CD8-positive, alpha-beta memory T cell (primary cell): ENCODE measurements at regions of chr3 and their contacts with region 1.

Region 1: GRCh38 chr3:141402476-141403171 is 34.3 kb downstream of the ZBTB38 start:
- DNase-seq: peak; percentile 21 to 70 (median 44)
- H3K4me3 ChIP-seq: peak overlapping the region; percentile 75
- H3K4me3 Mint-ChIP-seq: peak overlapping the region; percentile 93 to 99 (median 96)
- H3K27ac ChIP-seq: peak overlapping the region; percentile 55
- H3K27ac Mint-ChIP-seq: peak overlapping the region; percentile 92 to 97 (median 96)
- H3K4me1 ChIP-seq: peaks cover 61% of the 10 kb centered on the region
- H3K4me1 Mint-ChIP-seq: peaks cover 59 to 77% (median 74%) of the 10 kb centered on the region in 3 donors
- H3K27me3 ChIP-seq: no peaks in the 10 kb centered on the region
- H3K27me3 Mint-ChIP-seq: no peaks in the 10 kb centered on the region

Region 2: GRCh38 chr3:141379250-141379966 is 23.2 kb before region 1 on chr3:
- CTCF ChIA-PET with region 1: interaction called, 4 read pairs
- POLR2A ChIA-PET with region 1: interaction called, 10 read pairs
- DNase-seq: peak in 2 of 5 donors; percentile 41 to 68
- H3K4me3 ChIP-seq: no peak overlapping the region
- H3K4me3 Mint-ChIP-seq: peak overlapping the region; percentile 52 to 89 (median 80)
- H3K27ac ChIP-seq: peak overlapping the region; percentile 54
- H3K27ac Mint-ChIP-seq: peak overlapping the region; percentile 86 to 98 (median 96)
- H3K4me1 ChIP-seq: peaks cover 16% of the 10 kb centered on the region
- H3K4me1 Mint-ChIP-seq: peaks cover 33 to 48% (median 47%) of the 10 kb centered on the region in 3 donors
- H3K27me3 ChIP-seq: no peaks in the 10 kb centered on the region
- H3K27me3 Mint-ChIP-seq: no peaks in the 10 kb centered on the region

Region 3: GRCh38 chr3:141465221-141465620 is 62.6 kb after region 1 on chr3:
- CTCF ChIA-PET with region 1: no interaction called
- POLR2A ChIA-PET with region 1: no interaction called
- DNase-seq: no peak
- H3K4me3 ChIP-seq: no peak overlapping the region
- H3K4me3 Mint-ChIP-seq: no peak overlapping the region
- H3K27ac ChIP-seq: no peak overlapping the region
- H3K27ac Mint-ChIP-seq: no peak overlapping the region
- H3K4me1 ChIP-seq: no peaks in the 10 kb centered on the region
- H3K4me1 Mint-ChIP-seq: peaks cover 0 to 9% (median 4%) of the 10 kb centered on the region in 3 donors
- H3K27me3 ChIP-seq: no peaks in the 10 kb centered on the region
- H3K27me3 Mint-ChIP-seq: peaks cover 0 to 2% of the 10 kb centered on the region in 2 donors